ENCODE measurements at regions of chr17 and their contacts with region 1.

Region 1: DNA sequence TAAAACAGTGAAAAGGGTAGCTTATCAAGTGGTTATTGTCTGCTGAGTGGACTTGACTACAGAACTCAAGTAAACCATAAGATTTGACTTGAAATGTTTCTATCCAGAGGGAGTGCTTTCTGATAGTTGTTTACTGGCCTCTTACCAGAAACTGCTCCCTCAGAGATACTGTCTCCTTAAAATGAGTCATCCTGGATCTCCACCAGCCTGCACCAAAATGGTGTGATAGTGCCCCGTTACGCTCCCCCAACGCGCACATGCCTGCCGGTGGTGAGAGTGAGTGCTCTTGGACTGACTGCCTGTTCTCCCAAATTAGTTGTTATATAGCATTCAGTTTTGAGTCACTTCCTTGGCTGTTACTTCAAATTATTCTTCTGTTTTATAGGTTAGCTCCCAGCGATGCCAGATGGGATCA is 22.9 kb downstream of the PRCD start:
- DNase-seq: peak; percentile 86
- H3K4me3 ChIP-seq: no peak overlapping the region
- H3K27ac ChIP-seq: peak overlapping the region; percentile 18
- H3K4me1 ChIP-seq: peaks cover 34% of the 10 kb centered on the region
- H3K27me3 ChIP-seq: no peaks in the 10 kb centered on the region
- CTCF ChIP-seq: no peak

Region 2: GRCh38 chr17:76141212-76142038 is 421.3 kb before region 1 on chr17 and contains the start of gene FOXJ1:
- CTCF ChIA-PET with region 1: no interaction called
- POLR2A ChIA-PET with region 1: no interaction called
- intact Hi-C with region 1: no loop called
- DNase-seq: peak; percentile 96
- H3K4me3 ChIP-seq: peak within 1 kb of the TSS; percentile 38
- H3K27ac ChIP-seq: peak within 1 kb of the TSS; percentile 69
- H3K4me1 ChIP-seq: peaks cover 55% of the 10 kb centered on the region
- H3K27me3 ChIP-seq: no peaks in the 10 kb centered on the region
- CTCF ChIP-seq: no peak
- total RNA-seq, gene FOXJ1: 0.17 and 0.20 TPM in 2 replicates

Region 3: GRCh38 chr17:76421044-76421407 is 141.7 kb before region 1 on chr17:
- CTCF ChIA-PET with region 1: no interaction called
- POLR2A ChIA-PET with region 1: no interaction called
- intact Hi-C with region 1: no loop called
- DNase-seq: no peak
- H3K4me3 ChIP-seq: no peak overlapping the region
- H3K27ac ChIP-seq: no peak overlapping the region
- H3K4me1 ChIP-seq: peaks cover 14% of the 10 kb centered on the region
- H3K27me3 ChIP-seq: no peaks in the 10 kb centered on the region
- CTCF ChIP-seq: no peak

Region 4: DNA sequence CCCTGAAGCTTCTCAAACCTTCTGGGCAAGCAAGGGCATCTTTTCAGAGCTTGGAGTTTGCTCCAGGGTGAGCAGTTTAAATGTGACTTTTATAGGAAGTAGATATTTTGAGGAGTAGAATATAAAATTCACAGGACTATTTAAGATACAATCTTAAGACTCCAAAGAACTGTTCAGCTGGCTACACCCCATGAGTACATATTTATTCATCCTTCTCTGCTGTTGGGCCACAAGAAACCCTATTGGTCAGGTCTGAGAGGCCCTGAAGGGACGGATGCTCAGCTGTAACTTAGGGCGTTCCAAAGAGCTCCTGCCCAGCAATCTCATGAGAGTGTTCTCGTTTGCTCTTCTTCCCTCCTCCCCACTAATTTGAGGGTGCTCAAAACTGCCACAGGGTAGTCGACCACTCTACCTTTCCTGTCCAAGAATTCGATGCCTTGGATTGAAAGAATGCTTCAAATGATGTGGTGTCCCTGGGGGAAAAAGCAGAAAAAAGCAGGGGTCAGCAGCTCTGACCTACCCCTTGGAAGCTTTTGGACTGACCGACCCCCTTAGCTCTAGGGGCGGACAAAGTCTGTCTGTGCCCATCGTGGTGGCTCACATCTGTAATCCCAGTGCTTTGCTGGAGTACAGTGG is 15.7 kb after region 1 on chr17:
- CTCF ChIA-PET with region 1: no interaction called
- POLR2A ChIA-PET with region 1: no interaction called
- intact Hi-C with region 1: no loop called
- DNase-seq: no peak
- H3K4me3 ChIP-seq: no peak overlapping the region
- H3K27ac ChIP-seq: no peak overlapping the region
- H3K4me1 ChIP-seq: no peaks in the 10 kb centered on the region
- H3K27me3 ChIP-seq: no peaks in the 10 kb centered on the region
- CTCF ChIP-seq: no peak

Region 5: GRCh38 chr17:76623271-76624146 is 60.8 kb after region 1 on chr17:
- CTCF ChIA-PET with region 1: interaction called, 7 read pairs
- POLR2A ChIA-PET with region 1: no interaction called
- intact Hi-C with region 1: loop called (anchors 5 kb)
- DNase-seq: peak; percentile 74
- H3K4me3 ChIP-seq: peak overlapping the region; percentile 9
- H3K27ac ChIP-seq: no peak overlapping the region
- H3K4me1 ChIP-seq: no peaks in the 10 kb centered on the region
- H3K27me3 ChIP-seq: no peaks in the 10 kb centered on the region
- CTCF ChIP-seq: peak; percentile 92

Region 6: DNA sequence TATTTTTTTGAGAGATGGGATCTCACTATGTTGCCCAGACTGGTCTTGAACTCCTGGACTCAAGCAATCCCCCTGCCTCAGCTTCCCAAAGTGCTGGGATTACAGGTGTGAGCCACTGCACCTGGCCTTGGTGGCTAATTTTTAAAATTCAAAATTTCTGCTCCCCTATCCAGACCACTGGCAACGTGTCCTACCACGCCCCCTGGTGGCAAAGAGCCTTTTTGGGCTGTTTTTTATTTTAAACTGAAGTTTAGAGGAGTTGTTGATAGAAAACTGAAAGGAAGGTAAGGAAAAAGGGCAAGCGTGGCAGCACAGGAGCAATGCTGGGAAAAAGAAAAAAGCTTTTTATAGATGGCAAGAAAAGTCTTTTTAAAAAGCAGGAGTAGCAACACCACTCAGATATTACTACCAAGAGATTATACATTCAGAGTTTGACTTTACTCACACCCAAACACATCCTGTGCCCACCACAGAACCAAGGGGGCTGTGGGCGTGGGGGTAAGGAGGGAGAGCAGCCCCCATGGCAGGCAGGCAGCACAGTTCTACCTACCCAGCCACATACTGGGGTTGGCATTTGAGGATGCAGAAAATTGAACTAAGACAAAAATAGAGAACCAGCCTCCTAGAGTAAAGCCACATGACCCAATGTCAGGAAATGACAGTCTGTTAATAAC is 152.2 kb after region 1 on chr17:
- CTCF ChIA-PET with region 1: no interaction called
- POLR2A ChIA-PET with region 1: no interaction called
- intact Hi-C with region 1: loop called (anchors 10 kb)
- DNase-seq: peak; percentile 75
- H3K4me3 ChIP-seq: no peak overlapping the region
- H3K27ac ChIP-seq: peak overlapping the region; percentile 94
- H3K4me1 ChIP-seq: peaks cover 38% of the 10 kb centered on the region
- H3K27me3 ChIP-seq: no peaks in the 10 kb centered on the region
- CTCF ChIP-seq: peak; percentile 92

Measured in A673 (cell line).